Sigmoid colon (tissue), 7 donors: ENCODE measurements at regions of chr9 and their contacts with region 1.

Region 1: DNA sequence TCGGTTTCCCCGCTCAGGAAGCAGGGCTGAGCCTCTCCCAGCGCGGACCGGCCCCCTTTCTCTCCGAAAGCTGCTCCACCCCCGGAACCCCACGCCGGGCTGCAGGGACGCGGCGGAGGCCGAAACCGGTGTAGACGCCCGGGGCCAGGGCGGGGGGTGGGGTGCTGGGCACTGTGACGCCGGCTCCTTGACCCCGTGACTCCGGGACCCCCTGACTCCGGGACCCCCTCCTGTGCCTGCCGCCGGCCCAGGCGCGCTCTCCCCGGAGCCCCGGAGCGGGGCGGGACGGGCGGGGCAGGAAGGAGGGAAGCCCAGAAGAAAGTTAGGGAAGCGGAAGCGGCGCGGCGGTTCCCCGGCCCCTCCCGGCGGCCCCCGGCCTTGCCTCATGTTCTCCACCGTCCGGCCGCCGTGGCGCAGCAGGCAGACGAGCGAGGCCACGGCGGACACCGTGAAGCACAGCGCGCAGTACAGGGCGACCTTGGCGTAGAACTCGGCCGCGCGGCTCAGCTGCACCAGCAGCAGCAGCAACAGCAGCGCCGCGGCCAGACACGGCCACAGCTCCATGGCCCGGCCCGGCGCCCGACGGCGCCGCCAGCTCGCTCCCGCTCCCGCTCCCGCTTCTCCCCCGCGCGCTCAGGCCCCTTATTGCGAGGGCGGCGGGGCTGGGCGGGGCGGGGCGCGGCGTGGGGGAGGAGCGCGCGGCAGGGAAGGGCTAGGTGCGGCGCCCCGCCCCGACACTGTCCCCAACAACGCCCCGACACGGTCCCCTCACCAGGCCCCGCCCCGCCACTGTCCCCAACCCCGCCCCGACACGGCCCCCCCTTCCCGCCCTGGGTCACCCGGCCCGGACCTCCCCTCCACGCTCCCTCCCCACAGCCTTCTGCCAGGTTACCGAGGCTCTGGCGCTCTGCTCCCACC is at the start of gene AGPAT2:
- DNase-seq: peak; percentile 83
- H3K4me3 ChIP-seq: peak within 1 kb of the TSS; percentile 67 to 88 (median 72)
- H3K27ac ChIP-seq: peak within 1 kb of the TSS; percentile 78 to 88 (median 84)
- H3K4me1 ChIP-seq: peaks cover 0 to 49% (median 44%) of the 10 kb centered on the region in 4 donors
- H3K27me3 ChIP-seq: no peaks in the 10 kb centered on the region
- CTCF ChIP-seq: no peak
- EP300 ChIP-seq: no peak
- POLR2A ChIP-seq: no peak
- total RNA-seq, gene AGPAT2: 28.0 to 62.4 (median 33.7) TPM

Region 2: DNA sequence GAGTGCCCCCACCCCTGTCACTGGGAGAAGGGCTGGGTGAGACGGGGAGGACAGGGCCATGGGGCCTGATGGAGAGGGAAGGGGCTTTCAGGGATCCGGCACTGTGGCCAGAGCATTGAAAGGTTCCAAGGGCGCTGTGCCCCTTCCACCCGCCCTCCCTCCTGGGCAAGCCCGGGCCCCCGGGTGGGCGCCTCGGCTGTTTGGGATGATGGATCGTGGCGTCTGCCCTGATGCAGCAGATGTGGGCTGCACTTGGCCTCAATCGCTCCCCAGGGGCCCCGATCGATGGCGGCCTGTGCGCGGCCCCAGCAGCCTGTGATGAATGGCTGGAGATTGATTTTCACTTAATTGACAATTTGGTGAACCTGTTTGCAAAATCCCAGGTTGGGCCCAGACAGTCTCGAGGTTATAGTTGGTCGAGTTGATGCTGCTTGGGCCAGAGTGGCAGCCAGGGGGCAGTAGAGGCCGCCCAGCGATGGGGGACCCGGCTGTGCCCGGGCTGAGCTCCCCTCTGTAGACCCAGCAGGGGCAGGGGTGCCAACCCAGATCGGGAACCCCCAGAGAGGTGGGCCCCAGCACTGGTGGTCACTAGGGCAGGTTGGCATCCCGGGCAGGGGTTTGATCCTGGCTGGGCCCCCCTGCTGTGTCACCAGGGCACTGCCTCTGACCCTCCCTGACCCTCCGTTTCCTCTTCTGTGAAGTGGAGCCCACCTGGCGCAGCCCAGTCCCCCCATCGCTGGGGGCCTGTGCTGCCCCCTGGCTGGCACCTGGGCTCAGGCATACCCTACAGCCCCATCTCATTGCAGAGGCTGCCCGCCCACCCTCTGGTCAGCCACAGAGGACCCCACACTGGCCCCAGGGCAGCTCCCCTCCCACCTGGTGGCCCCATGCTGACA is 516.8 kb before region 1 on chr9:
- intact Hi-C with region 1: no loop called
- DNase-seq: no peak
- H3K4me3 ChIP-seq: no peak overlapping the region
- H3K27ac ChIP-seq: no peak overlapping the region
- H3K4me1 ChIP-seq: no peaks in the 10 kb centered on the region
- H3K27me3 ChIP-seq: peaks cover 0 to 50% (median 30%) of the 10 kb centered on the region in 3 donors
- CTCF ChIP-seq: peak in 2 of 4 experiments; percentile 16 to 24
- EP300 ChIP-seq: no peak
- POLR2A ChIP-seq: no peak

Region 3: DNA sequence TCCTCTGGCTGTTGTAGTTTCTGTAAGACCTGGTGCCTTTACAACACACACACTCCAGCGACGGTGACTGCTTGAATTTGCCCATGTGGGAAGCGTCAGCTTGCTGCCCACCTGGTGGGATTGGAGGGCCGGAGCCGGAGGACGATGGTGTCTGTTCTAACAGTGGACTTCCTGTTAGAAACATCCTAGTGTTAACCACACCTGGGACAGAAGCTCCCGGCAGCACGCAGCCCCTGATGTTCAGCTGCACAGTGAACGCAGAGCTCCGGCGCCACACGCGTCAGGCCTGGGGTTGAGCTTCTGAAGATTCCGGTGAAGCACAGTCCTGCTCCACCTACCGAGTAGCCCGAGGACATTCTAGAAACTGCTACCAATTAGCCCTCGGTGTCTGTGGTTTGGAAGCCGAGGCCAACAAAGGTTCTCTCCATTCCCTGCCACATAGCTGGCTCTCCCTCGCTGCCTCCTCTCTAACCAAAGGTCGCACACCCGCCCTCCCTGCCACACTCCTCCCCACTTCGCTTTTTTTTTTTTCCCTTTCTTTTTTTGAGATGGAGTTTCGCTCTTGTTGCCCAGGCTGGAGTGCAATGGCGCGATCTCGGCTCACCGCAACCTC is 262.2 kb before region 1 on chr9:
- intact Hi-C with region 1: no loop called
- DNase-seq: no peak
- H3K4me3 ChIP-seq: no peak overlapping the region
- H3K27ac ChIP-seq: no peak overlapping the region
- H3K4me1 ChIP-seq: no peaks in the 10 kb centered on the region
- H3K27me3 ChIP-seq: no peaks in the 10 kb centered on the region
- CTCF ChIP-seq: no peak
- EP300 ChIP-seq: no peak
- POLR2A ChIP-seq: no peak

Region 4: DNA sequence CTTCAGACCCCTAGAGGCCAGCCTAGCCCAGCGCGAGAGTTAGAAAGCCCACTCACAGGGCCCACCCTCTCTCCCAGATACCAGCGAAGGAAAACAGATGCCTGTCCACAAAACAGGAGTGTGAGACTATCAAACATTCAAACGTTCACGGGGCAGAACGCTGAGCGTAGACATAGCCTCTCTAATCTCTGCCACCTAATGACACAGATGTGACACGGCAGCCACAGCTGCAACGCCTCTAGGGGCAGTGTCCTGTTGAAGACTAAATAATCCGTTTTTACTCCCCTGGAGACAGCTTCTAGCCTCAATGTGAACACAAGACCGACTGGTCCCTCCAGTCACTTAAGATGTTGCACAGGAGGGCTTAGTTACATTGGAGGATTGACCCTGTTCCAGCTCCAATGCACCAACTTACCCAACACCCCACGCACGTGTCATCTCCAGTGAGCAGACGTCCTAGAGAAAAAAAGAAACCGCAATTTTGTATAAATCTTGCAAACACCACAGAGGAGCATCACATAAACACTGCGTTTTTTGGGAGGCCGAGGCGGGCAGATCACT is 39.7 kb after region 1 on chr9:
- intact Hi-C with region 1: loop called (anchors 2 kb)
- DNase-seq: no peak
- H3K4me3 ChIP-seq: peak overlapping the region; percentile 57 to 88 (median 64)
- H3K27ac ChIP-seq: peak overlapping the region in 3 of 4 donors; percentile 72 to 87 (median 85)
- H3K4me1 ChIP-seq: peaks cover 0 to 59% (median 40%) of the 10 kb centered on the region in 4 donors
- H3K27me3 ChIP-seq: no peaks in the 10 kb centered on the region
- CTCF ChIP-seq: peak in 1 of 4 experiments; percentile 27
- EP300 ChIP-seq: no peak
- POLR2A ChIP-seq: no peak